OCI-LY7 (cell line): ENCODE measurements at regions of chr2 and their contacts with region 1.

Region 1: GRCh38 chr2:136045835-136046570 is 60.6 kb upstream of the DARS1 start:
- DNase-seq: no peak
- H3K4me3 ChIP-seq: no peak overlapping the region
- H3K27ac ChIP-seq: no peak overlapping the region
- H3K4me1 ChIP-seq: peaks cover 11% of the 10 kb centered on the region
- CTCF ChIP-seq: no peak

Region 2: GRCh38 chr2:135525786-135526185 is 520.2 kb before region 1 on chr2:
- CTCF ChIA-PET with region 1: no interaction called
- POLR2A ChIA-PET with region 1: no interaction called
- intact Hi-C with region 1: no loop called
- DNase-seq: no peak
- H3K4me3 ChIP-seq: no peak overlapping the region
- H3K27ac ChIP-seq: no peak overlapping the region
- H3K4me1 ChIP-seq: peaks cover 21% of the 10 kb centered on the region
- CTCF ChIP-seq: no peak

Region 3: DNA sequence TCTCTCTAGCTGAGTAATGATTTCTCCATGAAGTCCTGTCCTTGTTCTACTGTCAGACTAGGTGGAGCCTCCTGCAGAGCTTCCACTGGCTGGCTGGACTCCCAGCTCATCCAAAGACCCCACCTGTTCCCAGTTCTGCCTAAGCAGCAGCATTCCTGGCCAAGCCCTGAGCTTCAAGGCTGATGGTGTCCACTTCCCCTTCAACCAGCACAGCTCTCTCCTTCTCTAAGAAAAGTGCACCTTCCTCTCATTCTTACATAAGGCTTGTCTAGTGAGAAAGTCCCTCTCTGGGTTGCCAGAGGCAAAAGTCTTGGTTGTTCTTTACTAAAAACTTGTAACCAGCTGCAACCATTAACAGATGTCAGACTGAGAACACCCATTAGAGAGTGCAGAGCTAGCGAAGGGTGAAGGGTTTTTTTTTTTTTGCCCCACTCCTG is 13.1 kb after region 1 on chr2:
- CTCF ChIA-PET with region 1: no interaction called
- POLR2A ChIA-PET with region 1: interaction called, 10 read pairs
- intact Hi-C with region 1: no loop called
- DNase-seq: peak; percentile 59
- H3K4me3 ChIP-seq: no peak overlapping the region
- H3K27ac ChIP-seq: peak overlapping the region; percentile 6
- H3K4me1 ChIP-seq: peaks cover 54% of the 10 kb centered on the region
- CTCF ChIP-seq: no peak